CD4-positive, alpha-beta memory T cell (primary cell): ENCODE measurements at regions of chr2 and their contacts with region 1.

Region 1: GRCh38 chr2:37196320-37197195 is at the start of gene CEBPZOS:
- DNase-seq: peak; percentile 88 to 90 (median 89)
- H3K4me3 ChIP-seq: peak within 1 kb of the TSS; percentile 80 to 93
- H3K4me3 Mint-ChIP-seq: peak within 1 kb of the TSS; percentile 97 to 100 (median 98)
- H3K27ac ChIP-seq: peak within 1 kb of the TSS; percentile 79
- H3K27ac Mint-ChIP-seq: peak within 1 kb of the TSS; percentile 87 to 100 (median 97)
- H3K4me1 ChIP-seq: peaks cover 41% of the 10 kb centered on the region
- H3K4me1 Mint-ChIP-seq: peaks cover 11 to 36% (median 19%) of the 10 kb centered on the region in 4 donors
- H3K27me3 ChIP-seq: no peaks in the 10 kb centered on the region
- H3K27me3 Mint-ChIP-seq: no peaks in the 10 kb centered on the region
- total RNA-seq, gene CEBPZOS: 39.6 to 41.0 TPM

Region 2: GRCh38 chr2:37083873-37084794 is 112.4 kb before region 1 on chr2 and contains the starts of genes GPATCH11 and HEATR5B:
- CTCF ChIA-PET with region 1: no interaction called
- POLR2A ChIA-PET with region 1: no interaction called
- intact Hi-C with region 1: loop called (anchors 1 kb)
- DNase-seq: peak; percentile 93 to 95 (median 94)
- H3K4me3 ChIP-seq: peak within 1 kb of the TSS; percentile 85 to 94
- H3K4me3 Mint-ChIP-seq: no peak within 1 kb of the TSS
- H3K27ac ChIP-seq: peak within 1 kb of the TSS; percentile 81
- H3K27ac Mint-ChIP-seq: no peak within 1 kb of the TSS
- H3K4me1 ChIP-seq: peaks cover 53% of the 10 kb centered on the region
- H3K4me1 Mint-ChIP-seq: peaks cover 13 to 39% (median 28%) of the 10 kb centered on the region in 4 donors
- H3K27me3 ChIP-seq: no peaks in the 10 kb centered on the region
- H3K27me3 Mint-ChIP-seq: no peaks in the 10 kb centered on the region
- total RNA-seq, gene GPATCH11: 17.3 to 18.9 TPM
- total RNA-seq, gene HEATR5B: 52.6 to 55.2 TPM

Region 3: GRCh38 chr2:37156857-37157714 is 39.5 kb before region 1 on chr2 and contains the start of gene EIF2AK2:
- CTCF ChIA-PET with region 1: no interaction called
- POLR2A ChIA-PET with region 1: interaction called, 10 read pairs
- intact Hi-C with region 1: loop called (anchors 2 kb)
- DNase-seq: peak; percentile 84 to 90 (median 87)
- H3K4me3 ChIP-seq: peak within 1 kb of the TSS; percentile 62 to 63
- H3K4me3 Mint-ChIP-seq: peak within 1 kb of the TSS; percentile 88 to 96 (median 94)
- H3K27ac ChIP-seq: peak within 1 kb of the TSS; percentile 72
- H3K27ac Mint-ChIP-seq: peak within 1 kb of the TSS; percentile 86 to 96 (median 92)
- H3K4me1 ChIP-seq: peaks cover 26% of the 10 kb centered on the region
- H3K4me1 Mint-ChIP-seq: peaks cover 34 to 54% (median 49%) of the 10 kb centered on the region in 4 donors
- H3K27me3 ChIP-seq: no peaks in the 10 kb centered on the region
- H3K27me3 Mint-ChIP-seq: no peaks in the 10 kb centered on the region
- total RNA-seq, gene EIF2AK2: 28.8 to 31.6 TPM